ENCODE measurements at regions of chr3 and their contacts with region 1.

Region 1: GRCh38 chr3:18111796-18112232 is 313.3 kb downstream of the SATB1 start:
- DNase-seq: no peak
- ATAC-seq: no peak
- H3K4me3 ChIP-seq: peak overlapping the region in 1 of 10 donors; percentile 24
- H3K27ac ChIP-seq: no peak overlapping the region
- H3K4me1 ChIP-seq: peaks cover 0 to 5% (median 0%) of the 10 kb centered on the region in 9 donors
- H3K27me3 ChIP-seq: no peaks in the 10 kb centered on the region
- CTCF ChIP-seq: no peak

Region 2: DNA sequence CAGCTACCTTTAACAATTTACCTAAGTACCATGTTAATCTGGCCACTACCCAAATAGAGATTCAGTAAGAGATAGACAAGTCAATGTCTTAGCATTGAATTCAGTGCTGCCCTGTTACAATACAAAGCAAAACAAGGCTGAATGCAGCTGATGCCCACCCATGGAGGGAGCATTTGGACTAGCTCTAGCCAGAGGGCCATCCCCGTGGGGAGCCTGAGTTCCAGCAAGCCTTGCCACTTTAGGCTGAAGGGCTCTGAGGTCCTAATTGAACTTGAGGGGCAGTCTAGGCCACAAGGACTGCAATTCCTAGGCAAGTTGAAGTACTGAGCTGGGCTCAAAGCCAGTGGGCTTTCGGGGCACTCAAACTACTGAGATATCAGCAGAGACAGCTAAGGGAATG is 1556.3 kb after region 1 on chr3:
- intact Hi-C with region 1: loop called in 1 of 10 experiments (anchors 5 kb)
- DNase-seq: no peak
- ATAC-seq: no peak
- H3K4me3 ChIP-seq: no peak overlapping the region
- H3K27ac ChIP-seq: no peak overlapping the region
- H3K4me1 ChIP-seq: no peaks in the 10 kb centered on the region
- H3K27me3 ChIP-seq: no peaks in the 10 kb centered on the region
- CTCF ChIP-seq: no peak